Ascending aorta (tissue), 2 donors: ENCODE measurements at regions of chr17 and their contacts with region 1.

Region 1: DNA sequence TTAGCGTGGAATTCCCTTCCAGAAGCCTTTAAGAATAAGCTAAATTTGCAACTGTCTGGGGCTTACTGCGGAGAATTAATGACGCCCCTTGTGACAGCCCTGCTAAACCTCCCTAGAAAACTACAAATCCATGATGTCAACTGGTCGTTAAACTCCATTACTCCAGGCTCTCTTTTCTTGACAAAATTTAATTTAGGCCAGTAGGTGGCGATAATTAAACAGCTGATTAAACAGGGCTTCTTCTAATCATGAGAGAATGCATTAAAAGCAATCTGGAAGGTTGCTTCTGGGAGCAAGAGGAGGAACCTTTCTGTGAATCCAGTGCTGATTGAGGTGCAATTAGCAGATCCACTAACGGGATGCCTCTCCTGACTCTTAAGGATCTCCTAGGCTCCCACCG is 8.1 kb upstream of the NLRP1 start:
- DNase-seq: no peak
- H3K4me3 ChIP-seq: no peak overlapping the region
- H3K27ac ChIP-seq: no peak overlapping the region
- H3K4me1 ChIP-seq: no peaks in the 10 kb centered on the region
- H3K27me3 ChIP-seq: no peaks in the 10 kb centered on the region
- CTCF ChIP-seq: peak; percentile 28 to 59 (median 58)

Region 2: DNA sequence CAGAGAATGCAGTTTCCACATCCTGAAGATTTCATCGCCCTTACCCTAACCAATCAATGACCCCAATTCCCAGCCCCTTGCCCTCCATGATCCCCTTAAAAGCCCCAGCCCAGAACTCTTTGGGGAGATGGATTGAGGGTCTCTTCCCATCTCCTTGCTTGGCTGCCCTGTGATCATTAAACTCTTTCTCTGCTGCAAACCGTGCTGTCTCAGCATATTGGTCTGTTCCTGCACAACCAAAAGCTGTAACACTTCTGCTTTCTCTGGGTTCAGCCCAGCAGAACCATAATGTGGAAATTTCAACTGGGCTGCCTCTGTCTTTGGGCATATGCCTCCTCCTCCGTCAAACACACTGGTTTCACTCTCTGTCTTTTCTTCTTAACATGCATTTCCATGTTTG is 59.0 kb after region 1 on chr17:
- intact Hi-C with region 1: no loop called
- DNase-seq: no peak
- H3K4me3 ChIP-seq: no peak overlapping the region
- H3K27ac ChIP-seq: no peak overlapping the region
- H3K4me1 ChIP-seq: no peaks in the 10 kb centered on the region
- H3K27me3 ChIP-seq: no peaks in the 10 kb centered on the region
- CTCF ChIP-seq: no peak

Region 3: GRCh38 chr17:5683241-5683640 is 90.9 kb after region 1 on chr17:
- intact Hi-C with region 1: no loop called
- DNase-seq: no peak
- H3K4me3 ChIP-seq: no peak overlapping the region
- H3K27ac ChIP-seq: no peak overlapping the region
- H3K4me1 ChIP-seq: no peaks in the 10 kb centered on the region
- H3K27me3 ChIP-seq: no peaks in the 10 kb centered on the region
- CTCF ChIP-seq: no peak

Region 4: GRCh38 chr17:6421700-6422604 is 829.6 kb after region 1 on chr17:
- intact Hi-C with region 1: loop called (anchors 1 kb)
- DNase-seq: peak; percentile 31 to 82
- H3K4me3 ChIP-seq: no peak overlapping the region
- H3K27ac ChIP-seq: no peak overlapping the region
- H3K4me1 ChIP-seq: no peaks in the 10 kb centered on the region
- H3K27me3 ChIP-seq: no peaks in the 10 kb centered on the region
- CTCF ChIP-seq: peak; percentile 75 to 91 (median 78)